ENCODE measurements at regions of chr19 and their contacts with region 1.

Region 1: GRCh38 chr19:41263850-41264580 is at the start of gene HNRNPUL1:
- DNase-seq: peak; percentile 99
- ATAC-seq: peak; percentile 40 to 81
- H3K4me3 ChIP-seq: peak within 1 kb of the TSS; percentile 64 to 95 (median 87)
- H3K27ac ChIP-seq: peak within 1 kb of the TSS; percentile 97 to 100 (median 99)
- H3K4me1 ChIP-seq: peaks cover 26 to 32% of the 10 kb centered on the region in 2 donors
- H3K27me3 ChIP-seq: no peaks in the 10 kb centered on the region
- CTCF ChIP-seq: peak in 3 of 5 experiments; percentile 26 to 43 (median 37)
- POLR2A ChIP-seq: peak; percentile 39 to 58
- total RNA-seq, gene HNRNPUL1: 49.5 to 101 (median 92.4) TPM

Region 2: DNA sequence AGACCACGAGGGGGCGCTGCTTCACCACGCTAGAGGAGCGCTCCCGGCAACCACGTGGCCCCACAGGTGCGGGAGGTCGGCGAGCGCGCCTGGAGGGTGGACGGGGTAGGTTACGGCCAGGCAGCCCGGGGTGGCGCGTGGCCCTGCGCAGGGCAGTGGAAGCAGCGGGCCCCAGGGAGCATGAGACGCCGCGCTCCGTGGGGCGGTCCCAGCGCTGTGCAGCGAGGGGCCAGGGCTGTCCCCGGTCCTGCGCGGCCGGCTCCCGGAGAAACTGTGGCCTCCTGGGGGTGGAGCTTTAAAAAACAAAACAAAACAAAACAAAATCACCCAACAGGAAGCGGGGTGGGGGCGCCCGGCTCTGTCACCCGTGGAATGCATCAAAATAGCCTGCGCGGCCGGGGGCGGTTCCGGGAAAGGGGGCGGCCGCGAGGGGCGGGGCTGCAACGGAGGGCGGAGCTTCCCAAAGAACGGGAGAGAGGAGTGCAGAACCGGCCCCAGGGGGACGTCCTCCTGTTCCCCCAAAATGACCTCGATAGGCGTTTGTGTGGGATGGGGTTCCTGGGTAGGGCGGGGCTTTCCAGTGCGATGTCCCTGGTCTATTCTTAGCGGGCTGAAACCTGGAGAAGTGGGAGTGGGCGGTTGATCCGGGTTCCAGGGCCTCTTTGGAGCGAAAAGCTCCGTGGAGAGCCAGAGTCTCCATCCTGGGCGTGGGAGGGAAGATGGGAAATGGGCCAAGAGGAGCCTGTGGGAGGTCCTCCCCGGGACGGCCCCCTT is 600.9 kb before region 1 on chr19:
- in situ Hi-C with region 1: loop called in 1 of 4 experiments (anchors 25 kb)
- intact Hi-C with region 1: loop called (anchors 10 kb)
- DNase-seq: peak; percentile 84 to 85
- ATAC-seq: peak; percentile 88 to 89
- H3K4me3 ChIP-seq: peak overlapping the region; percentile 80 to 96 (median 86)
- H3K27ac ChIP-seq: peak overlapping the region; percentile 87 to 94 (median 92)
- H3K4me1 ChIP-seq: peaks cover 6 to 11% of the 10 kb centered on the region in 2 donors
- H3K27me3 ChIP-seq: no peaks in the 10 kb centered on the region
- CTCF ChIP-seq: peak; percentile 95 to 99 (median 99)
- POLR2A ChIP-seq: no peak

Region 3: DNA sequence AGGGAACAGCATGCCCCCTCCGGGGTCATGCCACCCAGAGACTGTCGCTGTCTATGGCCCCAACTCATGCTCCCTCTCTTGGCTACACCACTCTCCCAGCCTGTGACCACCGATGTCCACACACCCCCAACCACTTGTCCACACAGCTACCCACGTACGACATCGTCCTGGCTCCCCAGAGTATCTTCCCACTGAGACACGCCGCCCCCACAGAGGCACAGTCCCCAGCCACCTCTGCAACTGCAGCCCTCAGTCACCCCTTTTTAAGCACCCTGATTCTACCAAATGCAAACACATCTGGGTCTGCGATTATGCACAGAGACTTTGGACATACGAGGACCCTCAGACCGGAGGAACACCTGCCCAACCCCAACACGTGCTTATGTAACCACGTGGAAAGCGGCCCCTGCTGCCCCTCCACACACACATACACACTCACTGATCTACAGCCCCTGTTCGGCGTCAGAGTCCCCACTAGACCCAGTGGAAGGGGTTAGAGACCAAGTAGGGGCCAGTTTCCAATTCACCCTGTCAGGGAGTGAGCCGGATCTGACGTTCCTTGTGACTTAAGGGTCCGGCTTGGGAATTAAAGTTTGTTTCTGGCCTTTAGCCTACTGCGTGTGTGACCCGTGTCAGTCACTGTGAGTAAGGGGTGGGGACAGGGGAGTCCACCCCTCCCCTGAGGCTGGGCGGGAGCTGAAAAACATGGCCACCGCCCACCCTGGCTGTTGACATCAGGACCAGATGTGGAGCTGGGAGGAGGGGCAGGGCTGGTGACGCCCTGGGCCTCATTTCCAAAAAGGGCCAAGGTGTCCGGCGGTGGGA is 56.9 kb before region 1 on chr19:
- in situ Hi-C with region 1: loop called in 3 of 4 experiments (anchors 5 kb)
- intact Hi-C with region 1: loop called (anchors 1 kb)
- DNase-seq: peak; percentile 67 to 88
- ATAC-seq: peak; percentile 60 to 79
- H3K4me3 ChIP-seq: no peak overlapping the region
- H3K27ac ChIP-seq: peak overlapping the region; percentile 58 to 65 (median 60)
- H3K4me1 ChIP-seq: no peaks in the 10 kb centered on the region
- H3K27me3 ChIP-seq: no peaks in the 10 kb centered on the region
- CTCF ChIP-seq: no peak
- POLR2A ChIP-seq: no peak

Region 4: GRCh38 chr19:41249707-41250423 is 14.2 kb before region 1 on chr19:
- in situ Hi-C with region 1: no loop called
- intact Hi-C with region 1: no loop called
- DNase-seq: no peak
- ATAC-seq: no peak
- H3K4me3 ChIP-seq: no peak overlapping the region
- H3K27ac ChIP-seq: no peak overlapping the region
- H3K4me1 ChIP-seq: no peaks in the 10 kb centered on the region
- H3K27me3 ChIP-seq: no peaks in the 10 kb centered on the region
- CTCF ChIP-seq: no peak
- POLR2A ChIP-seq: no peak

Region 5: GRCh38 chr19:41299755-41300314 is 35.8 kb after region 1 on chr19:
- in situ Hi-C with region 1: no loop called
- intact Hi-C with region 1: loop called (anchors 1 kb)
- DNase-seq: peak; percentile 68 to 87
- ATAC-seq: peak; percentile 79 to 88
- H3K4me3 ChIP-seq: no peak overlapping the region
- H3K27ac ChIP-seq: peak overlapping the region; percentile 81 to 89 (median 88)
- H3K4me1 ChIP-seq: peaks cover 35 to 53% of the 10 kb centered on the region in 2 donors
- H3K27me3 ChIP-seq: no peaks in the 10 kb centered on the region
- CTCF ChIP-seq: no peak
- POLR2A ChIP-seq: no peak

Region 6: GRCh38 chr19:41363753-41364523 is 99.9 kb after region 1 on chr19 and contains the start of gene B9D2:
- in situ Hi-C with region 1: no loop called
- intact Hi-C with region 1: loop called (anchors 5 kb)
- DNase-seq: peak; percentile 97 to 98
- ATAC-seq: peak; percentile 98 to 99
- H3K4me3 ChIP-seq: peak within 1 kb of the TSS; percentile 66 to 97 (median 86)
- H3K27ac ChIP-seq: peak within 1 kb of the TSS; percentile 94 to 100 (median 98)
- H3K4me1 ChIP-seq: peaks cover 3 to 6% of the 10 kb centered on the region in 2 donors
- H3K27me3 ChIP-seq: no peaks in the 10 kb centered on the region
- CTCF ChIP-seq: no peak
- POLR2A ChIP-seq: peak in 1 of 2 donors; percentile 49
- total RNA-seq, gene B9D2: 2.6 to 6.9 (median 4.5) TPM

Region 7: DNA sequence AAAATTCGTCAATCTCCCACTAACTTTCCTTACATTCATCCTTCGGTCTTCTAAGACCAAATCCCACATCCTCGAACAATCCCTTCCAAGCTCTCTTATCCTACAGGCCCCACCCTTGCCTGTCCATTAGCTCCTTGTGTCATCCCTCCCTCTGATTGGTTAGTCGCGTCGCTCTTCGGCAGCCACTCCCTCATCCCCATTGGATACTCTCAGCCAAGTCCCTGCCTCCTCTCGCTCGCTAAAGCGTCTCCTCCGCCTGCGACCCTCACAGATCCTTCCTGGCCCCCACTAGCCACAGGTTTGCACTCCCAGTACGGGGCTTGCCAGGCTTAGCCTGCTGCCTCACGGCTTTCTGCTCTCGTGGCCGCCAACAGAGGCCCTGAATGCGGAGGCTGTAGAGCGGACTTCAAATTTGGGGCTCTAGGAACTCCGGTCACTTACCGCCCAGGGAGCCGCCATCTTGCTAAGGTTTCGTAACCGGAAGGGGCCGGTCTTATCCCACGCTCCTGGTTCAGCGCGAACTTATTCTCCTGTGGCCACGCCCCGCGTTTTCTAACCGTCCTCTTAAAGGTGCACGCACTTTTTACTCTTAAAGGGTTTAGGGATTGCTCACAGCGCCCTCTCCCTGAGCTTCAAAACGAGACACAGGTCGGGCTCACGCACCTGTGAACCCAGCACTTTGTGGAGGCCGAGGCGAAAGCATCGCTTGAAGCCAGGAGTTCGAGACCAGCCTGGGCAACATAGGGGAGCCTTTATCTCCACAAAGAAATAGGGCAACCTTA is 175.6 kb after region 1 on chr19 and contains the start of gene DMAC2:
- in situ Hi-C with region 1: no loop called
- intact Hi-C with region 1: loop called (anchors 5 kb)
- DNase-seq: peak; percentile 97 to 98
- ATAC-seq: peak; percentile 99
- H3K4me3 ChIP-seq: peak within 1 kb of the TSS; percentile 71 to 84 (median 82)
- H3K27ac ChIP-seq: peak within 1 kb of the TSS; percentile 91 to 95 (median 93)
- H3K4me1 ChIP-seq: peaks cover 9 to 13% of the 10 kb centered on the region in 2 donors
- H3K27me3 ChIP-seq: no peaks in the 10 kb centered on the region
- CTCF ChIP-seq: peak; percentile 29 to 66 (median 38)
- POLR2A ChIP-seq: peak; percentile 65 to 74
- total RNA-seq, gene DMAC2: 41.0 to 61.0 (median 49.8) TPM

Measured in gastrocnemius medialis (tissue), 4 donors.